K562 (cell line): ENCODE measurements at regions of chr1 and their contacts with region 1.

Region 1: GRCh38 chr1:204506961-204507387 is 9.2 kb upstream of the MDM4 start:
- DNase-seq: peak; percentile 66 to 94 (median 68)
- ATAC-seq: peak; percentile 79
- H3K4me3 ChIP-seq: peak overlapping the region; percentile 46
- H3K27ac ChIP-seq: peak overlapping the region; percentile 91
- H3K4me1 ChIP-seq: peaks cover 0 to 6% of the 10 kb centered on the region in 2 experiments; a peak in 2 of 5 replicates
- H3K27me3 ChIP-seq: no peaks in the 10 kb centered on the region
- CTCF ChIP-seq: no peak
- EP300 ChIP-seq: peak; percentile 85
- POLR2A ChIP-seq: no peak
- RAD21 ChIP-seq: peak in 1 of 2 experiments; percentile 55; a peak in 3 of 4 replicates

Region 2: GRCh38 chr1:204162231-204163074 is 344.5 kb before region 1 on chr1:
- CTCF ChIA-PET with region 1: interaction called, 14 read pairs
- POLR2A ChIA-PET with region 1: no interaction called
- in situ Hi-C with region 1: no loop called
- intact Hi-C with region 1: loop called (anchors 1 kb)
- DNase-seq: peak; percentile 76 to 94 (median 90)
- ATAC-seq: peak; percentile 98
- H3K4me3 ChIP-seq: no peak overlapping the region
- H3K27ac ChIP-seq: no peak overlapping the region
- H3K4me1 ChIP-seq: no peaks in the 10 kb centered on the region
- H3K27me3 ChIP-seq: peaks cover 3 to 43% of the 10 kb centered on the region in 2 experiments; a peak in 4 of 5 replicates
- CTCF ChIP-seq: peak; percentile 96 to 99 (median 98)
- EP300 ChIP-seq: no peak
- POLR2A ChIP-seq: no peak
- RAD21 ChIP-seq: peak; percentile 99 to 100

Region 3: GRCh38 chr1:204363335-204364124 is 143.4 kb before region 1 on chr1:
- CTCF ChIA-PET with region 1: interaction called, 6 read pairs
- POLR2A ChIA-PET with region 1: no interaction called
- in situ Hi-C with region 1: no loop called
- intact Hi-C with region 1: loop called (anchors 1 kb)
- DNase-seq: peak; percentile 84 to 88 (median 87)
- ATAC-seq: peak; percentile 88
- H3K4me3 ChIP-seq: peak overlapping the region; percentile 30
- H3K27ac ChIP-seq: peak overlapping the region; percentile 31; the same call in 2 of the 3 replicates
- H3K4me1 ChIP-seq: peaks cover 24 to 34% of the 10 kb centered on the region in 2 experiments
- H3K27me3 ChIP-seq: peaks cover 14 to 44% of the 10 kb centered on the region in 2 experiments
- CTCF ChIP-seq: peak; percentile 96 to 100 (median 98)
- EP300 ChIP-seq: peak; percentile 22; the same call in 1 of the 2 replicates
- POLR2A ChIP-seq: no peak
- RAD21 ChIP-seq: peak; percentile 100

Region 4: GRCh38 chr1:204390751-204391466 is 116.1 kb before region 1 on chr1:
- CTCF ChIA-PET with region 1: no interaction called
- POLR2A ChIA-PET with region 1: no interaction called
- in situ Hi-C with region 1: no loop called
- intact Hi-C with region 1: no loop called
- DNase-seq: no peak
- ATAC-seq: no peak
- H3K4me3 ChIP-seq: no peak overlapping the region
- H3K27ac ChIP-seq: no peak overlapping the region
- H3K4me1 ChIP-seq: no peaks in the 10 kb centered on the region
- H3K27me3 ChIP-seq: peaks cover 25 to 27% of the 10 kb centered on the region in 2 experiments
- CTCF ChIP-seq: no peak
- EP300 ChIP-seq: no peak
- POLR2A ChIP-seq: no peak
- RAD21 ChIP-seq: no peak

Region 5: DNA sequence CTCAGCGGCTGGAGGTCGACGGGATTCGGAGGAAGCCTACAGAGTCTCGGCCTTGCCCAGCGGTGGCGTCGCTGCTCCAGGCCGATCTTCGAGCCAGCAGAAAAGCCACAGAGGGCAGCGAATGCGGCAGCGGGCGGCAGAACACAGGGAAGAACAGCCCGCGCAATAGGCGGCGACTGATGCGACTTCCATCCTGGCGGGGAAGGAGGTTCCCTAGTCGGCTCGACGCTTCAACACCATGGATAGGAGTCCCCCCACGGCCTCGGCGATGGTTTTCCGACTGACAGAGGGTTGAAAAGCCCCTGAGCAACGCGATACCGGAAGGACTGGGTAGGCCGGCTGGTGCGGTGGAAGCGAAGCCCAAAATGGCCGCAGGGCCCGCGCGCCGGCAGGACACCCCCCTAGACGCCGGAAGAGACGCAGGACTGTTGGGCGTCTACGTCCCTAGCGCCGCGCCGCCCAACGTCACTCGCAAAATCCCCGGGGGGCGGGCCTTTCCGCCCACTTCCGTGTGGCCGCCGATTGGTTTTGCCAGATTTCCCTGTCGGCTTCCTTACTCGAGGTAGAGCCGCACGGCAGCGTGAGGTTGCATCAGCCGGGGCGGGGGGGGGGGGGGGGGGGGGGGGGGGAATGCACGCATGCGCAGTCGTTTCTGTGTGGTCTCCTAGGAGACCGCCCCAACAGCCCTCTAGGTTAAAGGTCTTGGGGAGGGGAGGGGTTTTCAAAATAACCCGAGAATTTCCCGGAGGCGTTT is 95.3 kb before region 1 on chr1 and contains the start of gene PPP1R15B:
- CTCF ChIA-PET with region 1: no interaction called
- POLR2A ChIA-PET with region 1: interaction called, 9 read pairs
- in situ Hi-C with region 1: no loop called
- intact Hi-C with region 1: loop called (anchors 5 kb)
- DNase-seq: peak; percentile 98 to 99 (median 99)
- ATAC-seq: peak; percentile 90
- H3K4me3 ChIP-seq: peak within 1 kb of the TSS; percentile 90
- H3K27ac ChIP-seq: peak within 1 kb of the TSS; percentile 93
- H3K4me1 ChIP-seq: peaks cover 9 to 10% of the 10 kb centered on the region in 2 experiments; a peak in 4 of 5 replicates
- H3K27me3 ChIP-seq: no peaks in the 10 kb centered on the region
- CTCF ChIP-seq: no peak
- EP300 ChIP-seq: peak; percentile 74
- POLR2A ChIP-seq: peak; percentile 97
- RAD21 ChIP-seq: no peak
- polyA plus RNA-seq, gene PPP1R15B: 17.0 to 24.7 TPM

Region 6: GRCh38 chr1:204446370-204447111 is 60.4 kb before region 1 on chr1:
- CTCF ChIA-PET with region 1: interaction called, 29 read pairs
- POLR2A ChIA-PET with region 1: interaction called, 3 read pairs
- in situ Hi-C with region 1: loop called (anchors 5 kb)
- intact Hi-C with region 1: loop called (anchors 1 kb)
- DNase-seq: peak; percentile 70 to 79 (median 74)
- ATAC-seq: peak; percentile 82
- H3K4me3 ChIP-seq: no peak overlapping the region
- H3K27ac ChIP-seq: no peak overlapping the region
- H3K4me1 ChIP-seq: peaks cover 0 to 4% of the 10 kb centered on the region in 2 experiments; a peak in 1 of 5 replicates
- H3K27me3 ChIP-seq: peaks cover 12 to 59% of the 10 kb centered on the region in 2 experiments; a peak in 4 of 5 replicates
- CTCF ChIP-seq: peak in 2 of 3 experiments; percentile 72 to 83; a peak in 4 of 6 replicates
- EP300 ChIP-seq: no peak
- POLR2A ChIP-seq: no peak
- RAD21 ChIP-seq: peak; percentile 86 to 91

Region 7: DNA sequence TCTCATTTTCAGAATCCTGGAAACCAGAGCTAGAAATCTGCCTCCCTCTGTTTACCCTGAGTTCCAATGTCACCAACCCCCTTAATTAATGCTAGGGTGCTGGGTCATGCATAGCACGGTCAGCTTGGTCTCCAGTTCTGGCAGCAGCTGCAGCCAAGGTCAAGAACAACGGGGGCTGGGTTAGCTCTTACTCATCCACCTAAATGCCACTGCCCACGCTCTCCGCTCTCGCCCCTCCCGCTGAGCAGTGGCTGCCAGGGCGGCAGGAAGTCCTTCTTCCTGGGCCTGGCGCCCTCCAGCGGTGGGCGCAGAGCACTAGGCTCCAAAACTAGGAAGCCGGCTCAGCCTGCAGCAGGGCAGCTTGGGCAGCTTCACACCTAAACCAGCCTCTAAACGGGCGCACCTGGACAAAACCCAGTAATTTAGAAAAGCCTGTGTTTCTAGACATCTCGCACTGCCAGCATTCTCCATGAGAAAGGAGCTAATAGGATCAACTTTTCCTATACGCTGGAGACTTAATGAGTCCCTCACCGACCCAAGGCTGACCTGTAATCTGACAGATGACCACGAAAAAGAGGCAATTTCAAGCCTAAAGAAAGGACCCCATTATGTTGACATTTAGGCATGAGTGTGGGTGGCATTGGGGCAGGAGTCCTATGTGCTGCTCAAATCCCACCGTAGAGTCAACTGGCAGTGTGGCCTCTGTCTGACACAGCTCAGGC is 256.9 kb after region 1 on chr1:
- CTCF ChIA-PET with region 1: no interaction called
- POLR2A ChIA-PET with region 1: no interaction called
- in situ Hi-C with region 1: no loop called
- intact Hi-C with region 1: no loop called
- DNase-seq: peak; percentile 79 to 89 (median 87)
- ATAC-seq: peak; percentile 99
- H3K4me3 ChIP-seq: no peak overlapping the region
- H3K27ac ChIP-seq: no peak overlapping the region
- H3K4me1 ChIP-seq: peaks cover 5 to 6% of the 10 kb centered on the region in 2 experiments; a peak in 4 of 5 replicates
- H3K27me3 ChIP-seq: peaks cover 8 to 14% of the 10 kb centered on the region in 2 experiments; a peak in 4 of 5 replicates
- CTCF ChIP-seq: peak; percentile 93 to 97 (median 95)
- EP300 ChIP-seq: peak; percentile 45; the same call in 1 of the 2 replicates
- POLR2A ChIP-seq: no peak
- RAD21 ChIP-seq: peak; percentile 91

Region 8: GRCh38 chr1:204806943-204807687 is 300.1 kb after region 1 on chr1:
- CTCF ChIA-PET with region 1: interaction called, 12 read pairs
- POLR2A ChIA-PET with region 1: no interaction called
- in situ Hi-C with region 1: no loop called
- intact Hi-C with region 1: loop called (anchors 1 kb)
- DNase-seq: peak; percentile 92 to 97 (median 96)
- ATAC-seq: peak; percentile 99
- H3K4me3 ChIP-seq: peak overlapping the region; percentile 46
- H3K27ac ChIP-seq: no peak overlapping the region
- H3K4me1 ChIP-seq: peaks cover 2 to 6% of the 10 kb centered on the region in 2 experiments; a peak in 3 of 5 replicates
- H3K27me3 ChIP-seq: peaks cover 0 to 13% of the 10 kb centered on the region in 2 experiments; a peak in 2 of 5 replicates
- CTCF ChIP-seq: peak; percentile 98 to 100 (median 98)
- EP300 ChIP-seq: no peak
- POLR2A ChIP-seq: no peak
- RAD21 ChIP-seq: peak; percentile 96 to 98